ENCODE measurements at regions of chr2 and their contacts with region 1.

Region 1: GRCh38 chr2:113756355-113757137 is at the start of gene SLC35F5:
- DNase-seq: peak; percentile 84 to 99 (median 92)
- ATAC-seq: peak; percentile 97
- H3K4me3 ChIP-seq: peak within 1 kb of the TSS; percentile 79
- H3K4me3 Mint-ChIP-seq: peak within 1 kb of the TSS; percentile 87 to 99 (median 97)
- H3K27ac ChIP-seq: peak within 1 kb of the TSS; percentile 96
- H3K27ac Mint-ChIP-seq: peak within 1 kb of the TSS; percentile 97 to 100 (median 99)
- H3K4me1 ChIP-seq: peaks cover 8 to 11% of the 10 kb centered on the region in 2 donors
- H3K4me1 Mint-ChIP-seq: peaks cover 10 to 38% (median 28%) of the 10 kb centered on the region in 7 donors
- H3K27me3 ChIP-seq: no peaks in the 10 kb centered on the region
- H3K27me3 Mint-ChIP-seq: no peaks in the 10 kb centered on the region
- total RNA-seq, gene SLC35F5: 20.9 to 33.4 (median 26.4) TPM

Region 2: DNA sequence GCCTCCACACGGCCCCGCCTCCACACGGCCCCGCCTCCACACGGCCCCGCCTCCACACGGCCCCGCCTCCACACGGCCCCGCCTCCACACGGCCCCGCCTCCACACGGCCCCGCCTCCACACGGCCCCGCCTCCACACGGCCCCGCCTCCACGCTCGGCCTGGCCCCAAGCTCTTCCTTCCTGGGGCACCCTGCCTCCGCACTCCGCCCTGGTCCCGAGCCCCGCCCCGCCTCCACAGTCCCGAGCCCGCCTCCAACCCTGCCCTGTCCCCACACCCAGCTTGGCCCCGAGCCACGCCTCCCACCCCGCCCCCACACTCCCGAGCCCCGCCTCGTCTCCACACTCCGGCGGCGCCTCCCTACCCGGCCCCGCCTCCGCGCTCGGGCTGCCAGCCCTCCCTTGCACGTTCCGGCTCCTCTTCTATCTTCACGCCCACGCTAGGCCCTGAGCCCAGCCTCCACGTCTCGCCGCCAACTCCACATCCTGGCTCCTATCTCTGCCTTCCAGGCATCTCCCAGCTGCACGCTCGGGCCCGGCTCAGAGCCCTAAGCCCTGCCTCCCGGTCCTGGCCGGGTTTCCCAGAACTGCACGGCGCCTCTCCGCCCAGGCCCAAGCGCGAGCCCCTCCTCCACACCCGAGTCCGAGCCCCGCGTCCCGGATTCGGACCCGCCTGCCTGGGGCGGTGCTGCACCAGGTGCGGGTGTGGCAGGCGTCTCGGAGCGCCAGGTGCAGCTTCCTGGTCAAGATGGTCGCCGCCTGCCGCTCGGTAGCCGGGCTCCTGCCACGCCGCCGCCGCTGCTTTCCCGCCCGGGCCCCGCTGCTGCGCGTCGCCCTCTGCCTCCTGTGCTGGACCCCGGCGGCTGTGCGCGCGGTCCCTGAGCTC is 1701.5 kb before region 1 on chr2 and contains the start of gene TMEM87B:
- CTCF ChIA-PET with region 1: no interaction called
- POLR2A ChIA-PET with region 1: interaction called, 3 read pairs
- intact Hi-C with region 1: loop called in 1 of 2 experiments (anchors 10 kb)
- DNase-seq: peak; percentile 90 to 98 (median 96)
- ATAC-seq: peak; percentile 80
- H3K4me3 ChIP-seq: peak within 1 kb of the TSS; percentile 85
- H3K4me3 Mint-ChIP-seq: peak within 1 kb of the TSS; percentile 80 to 100 (median 95)
- H3K27ac ChIP-seq: peak within 1 kb of the TSS; percentile 82
- H3K27ac Mint-ChIP-seq: peak within 1 kb of the TSS; percentile 92 to 100 (median 98)
- H3K4me1 ChIP-seq: peaks cover 16 to 19% of the 10 kb centered on the region in 2 donors
- H3K4me1 Mint-ChIP-seq: peaks cover 33 to 48% (median 42%) of the 10 kb centered on the region in 7 donors
- H3K27me3 ChIP-seq: no peaks in the 10 kb centered on the region
- H3K27me3 Mint-ChIP-seq: peaks cover 0 to 2% (median 0%) of the 10 kb centered on the region in 5 donors
- total RNA-seq, gene TMEM87B: 14.0 to 26.9 (median 17.4) TPM

Region 3: DNA sequence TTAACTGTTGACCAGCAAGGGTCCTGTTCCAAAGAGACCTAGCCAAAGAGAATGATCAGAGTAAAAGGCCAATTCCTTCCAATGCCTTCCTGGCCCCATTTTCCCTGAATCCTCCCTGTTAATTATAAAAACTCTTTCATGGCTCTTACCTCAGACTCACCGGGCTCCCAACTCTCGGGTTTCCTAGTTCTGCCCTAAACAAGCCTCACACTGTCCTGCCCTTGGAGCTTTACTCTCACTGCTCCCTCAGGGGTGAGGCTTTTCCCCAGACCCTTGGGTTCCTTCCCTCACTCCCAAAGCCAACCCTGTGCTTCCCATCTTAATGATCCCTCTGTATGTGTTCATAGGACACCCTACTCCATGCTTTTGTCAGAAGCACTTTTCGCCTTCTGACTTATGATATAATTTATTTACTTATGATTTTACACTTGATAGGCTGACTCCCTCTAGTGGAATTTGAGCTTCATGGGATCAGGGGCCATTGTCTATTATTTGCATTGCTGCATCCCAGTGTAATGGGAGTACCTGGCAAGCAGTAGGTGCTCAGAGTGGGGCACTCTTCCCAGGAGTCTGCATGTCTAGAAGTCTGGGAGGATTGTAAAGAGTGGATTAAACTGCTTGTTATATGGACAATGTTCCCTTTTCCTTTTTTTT is 349.0 kb before region 1 on chr2:
- CTCF ChIA-PET with region 1: no interaction called
- POLR2A ChIA-PET with region 1: no interaction called
- intact Hi-C with region 1: no loop called
- DNase-seq: no peak
- ATAC-seq: no peak
- H3K4me3 ChIP-seq: no peak overlapping the region
- H3K4me3 Mint-ChIP-seq: no peak overlapping the region
- H3K27ac ChIP-seq: no peak overlapping the region
- H3K27ac Mint-ChIP-seq: no peak overlapping the region
- H3K4me1 ChIP-seq: no peaks in the 10 kb centered on the region
- H3K4me1 Mint-ChIP-seq: no peaks in the 10 kb centered on the region
- H3K27me3 ChIP-seq: no peaks in the 10 kb centered on the region
- H3K27me3 Mint-ChIP-seq: peaks cover 5 to 58% (median 28%) of the 10 kb centered on the region in 5 donors

Region 4: DNA sequence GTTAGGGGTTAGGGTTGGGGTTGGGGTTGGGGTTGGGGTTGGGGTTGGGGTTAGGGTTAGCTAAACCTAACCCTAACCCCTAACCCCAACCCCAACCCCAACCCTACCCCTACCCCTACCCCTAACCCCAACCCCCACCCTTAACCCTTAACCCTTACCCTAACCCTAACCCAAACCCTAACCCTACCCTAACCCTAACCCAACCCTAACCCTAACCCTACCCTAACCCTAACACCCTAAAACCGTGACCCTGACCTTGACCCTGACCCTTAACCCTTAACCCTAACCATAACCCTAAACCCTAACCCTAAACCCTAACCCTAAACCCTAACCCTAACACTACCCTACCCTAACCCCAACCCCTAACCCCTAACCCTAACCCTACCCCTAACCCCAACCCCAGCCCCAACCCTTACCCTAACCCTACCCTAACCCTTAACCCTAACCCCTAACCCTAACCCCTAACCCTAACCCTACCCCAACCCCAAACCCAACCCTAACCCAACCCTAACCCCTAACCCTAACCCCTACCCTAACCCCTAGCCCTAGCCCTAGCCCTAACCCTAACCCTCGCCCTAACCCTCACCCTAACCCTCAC is 153.6 kb before region 1 on chr2:
- CTCF ChIA-PET with region 1: interaction called, 3 read pairs
- POLR2A ChIA-PET with region 1: no interaction called
- intact Hi-C with region 1: loop called in 1 of 2 experiments (anchors 10 kb)
- DNase-seq: no peak
- ATAC-seq: no peak
- H3K4me3 ChIP-seq: peak overlapping the region; percentile 51
- H3K4me3 Mint-ChIP-seq: peak overlapping the region; percentile 78 to 94 (median 91)
- H3K27ac ChIP-seq: peak overlapping the region; percentile 79
- H3K27ac Mint-ChIP-seq: peak overlapping the region; percentile 88 to 98 (median 94)
- H3K4me1 ChIP-seq: no peaks in the 10 kb centered on the region
- H3K4me1 Mint-ChIP-seq: peaks cover 0 to 9% (median 5%) of the 10 kb centered on the region in 7 donors
- H3K27me3 ChIP-seq: no peaks in the 10 kb centered on the region
- H3K27me3 Mint-ChIP-seq: no peaks in the 10 kb centered on the region

Region 5: DNA sequence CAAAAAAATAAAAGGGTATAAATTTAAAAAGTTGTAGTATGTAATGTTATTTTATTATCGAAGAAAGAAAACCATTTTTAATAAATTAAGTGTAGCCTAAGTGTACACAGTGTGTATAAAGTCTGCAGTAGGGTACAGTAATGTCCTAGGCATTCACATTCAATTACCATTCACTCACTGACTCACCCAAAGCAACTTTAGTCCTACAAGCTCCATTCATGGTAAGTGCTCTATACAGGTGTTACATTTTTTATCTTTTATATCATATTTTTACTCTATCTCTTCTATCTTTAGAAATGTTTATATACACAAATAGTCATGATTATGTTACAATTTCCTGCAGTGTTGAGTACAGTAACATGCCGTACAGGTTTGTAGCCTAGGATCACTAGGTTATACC is 70.0 kb before region 1 on chr2:
- CTCF ChIA-PET with region 1: no interaction called
- POLR2A ChIA-PET with region 1: no interaction called
- intact Hi-C with region 1: no loop called
- DNase-seq: no peak
- ATAC-seq: no peak
- H3K4me3 ChIP-seq: no peak overlapping the region
- H3K4me3 Mint-ChIP-seq: no peak overlapping the region
- H3K27ac ChIP-seq: no peak overlapping the region
- H3K27ac Mint-ChIP-seq: no peak overlapping the region
- H3K4me1 ChIP-seq: no peaks in the 10 kb centered on the region
- H3K4me1 Mint-ChIP-seq: peaks cover 0 to 4% (median 0%) of the 10 kb centered on the region in 7 donors
- H3K27me3 ChIP-seq: no peaks in the 10 kb centered on the region
- H3K27me3 Mint-ChIP-seq: peaks cover 0 to 22% (median 0%) of the 10 kb centered on the region in 5 donors

Region 6: GRCh38 chr2:113741091-113741490 is 15.5 kb before region 1 on chr2:
- CTCF ChIA-PET with region 1: no interaction called
- POLR2A ChIA-PET with region 1: interaction called, 13 read pairs
- intact Hi-C with region 1: no loop called
- DNase-seq: no peak
- ATAC-seq: no peak
- H3K4me3 ChIP-seq: no peak overlapping the region
- H3K4me3 Mint-ChIP-seq: no peak overlapping the region
- H3K27ac ChIP-seq: no peak overlapping the region
- H3K27ac Mint-ChIP-seq: no peak overlapping the region
- H3K4me1 ChIP-seq: no peaks in the 10 kb centered on the region
- H3K4me1 Mint-ChIP-seq: peaks cover 0 to 1% (median 0%) of the 10 kb centered on the region in 7 donors
- H3K27me3 ChIP-seq: no peaks in the 10 kb centered on the region
- H3K27me3 Mint-ChIP-seq: no peaks in the 10 kb centered on the region

Region 7: DNA sequence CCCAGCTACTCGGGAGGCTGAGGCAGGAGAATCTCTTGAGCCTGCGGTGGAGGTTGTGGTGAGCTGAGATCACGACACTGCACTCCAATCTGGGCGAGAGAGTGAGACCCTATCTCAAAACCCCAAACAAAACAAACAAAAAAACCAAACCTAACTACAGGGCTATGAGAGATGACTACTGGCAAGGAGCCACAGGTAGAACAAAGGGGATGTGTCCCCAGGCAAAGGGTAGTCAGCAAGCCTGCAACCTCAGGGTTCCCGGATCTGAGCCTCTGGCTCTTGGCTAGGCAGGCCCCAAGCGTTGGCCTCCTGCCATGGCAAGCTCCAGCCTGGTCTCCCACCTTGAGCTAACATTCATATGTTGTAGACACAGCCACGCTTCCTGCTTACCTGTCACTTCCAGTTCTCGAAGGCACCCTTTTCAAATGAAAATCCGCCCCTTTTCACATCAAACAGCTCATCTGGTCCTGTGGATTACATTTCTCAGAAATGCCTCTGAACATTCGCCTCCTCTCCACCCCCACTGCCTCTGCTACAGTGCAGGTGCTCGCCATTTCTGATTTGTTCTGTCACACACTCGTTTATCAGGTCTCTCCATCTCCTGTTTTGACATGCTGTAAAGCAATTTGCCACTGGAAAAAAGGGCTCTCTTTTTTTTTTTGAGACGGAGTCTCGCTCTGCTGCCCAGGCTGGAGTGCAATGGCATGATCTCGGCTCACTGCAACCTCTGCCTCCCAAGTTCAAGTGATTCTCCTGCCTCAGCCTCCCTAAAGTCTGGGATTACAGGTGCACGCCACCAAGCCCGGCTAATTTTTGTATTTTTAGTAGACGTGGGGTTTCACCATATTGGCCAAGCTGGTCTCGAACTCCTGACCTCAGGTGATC is 120.2 kb after region 1 on chr2:
- CTCF ChIA-PET with region 1: no interaction called
- POLR2A ChIA-PET with region 1: interaction called, 7 read pairs
- intact Hi-C with region 1: loop called in 1 of 2 experiments (anchors 2 kb)
- DNase-seq: peak; percentile 31 to 93 (median 85)
- ATAC-seq: peak; percentile 90
- H3K4me3 ChIP-seq: no peak overlapping the region
- H3K4me3 Mint-ChIP-seq: peak overlapping the region; percentile 55 to 84 (median 72)
- H3K27ac ChIP-seq: peak overlapping the region; percentile 73
- H3K27ac Mint-ChIP-seq: peak overlapping the region; percentile 83 to 96 (median 92)
- H3K4me1 ChIP-seq: peaks cover 4 to 23% of the 10 kb centered on the region in 2 donors
- H3K4me1 Mint-ChIP-seq: peaks cover 38 to 69% (median 64%) of the 10 kb centered on the region in 7 donors
- H3K27me3 ChIP-seq: no peaks in the 10 kb centered on the region
- H3K27me3 Mint-ChIP-seq: no peaks in the 10 kb centered on the region